ENCODE measurements at regions of chr9 and their contacts with region 1.

Region 1: DNA sequence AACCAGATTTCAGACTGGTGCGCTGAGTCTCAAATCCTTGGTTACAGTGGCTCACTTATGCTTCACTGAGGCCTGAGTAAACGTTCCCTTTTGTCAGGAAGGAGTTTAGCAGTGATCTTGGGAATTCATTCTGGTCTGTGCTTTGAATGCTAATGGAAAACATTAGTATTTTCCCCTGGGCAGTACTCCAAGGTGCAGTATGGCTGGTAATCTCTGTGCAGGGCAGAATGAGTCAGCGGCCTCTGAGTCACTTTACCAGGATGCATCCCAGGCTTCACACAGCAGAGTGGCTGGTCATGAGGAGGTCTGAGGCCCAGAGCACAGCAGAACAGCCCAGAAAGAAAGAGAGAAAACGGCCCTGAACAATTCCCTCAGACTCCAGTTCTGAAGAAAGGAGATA is 54.0 kb downstream of the PCA3 start:
- DNase-seq: peak; percentile 97
- H3K4me3 Mint-ChIP-seq: no peak overlapping the region
- H3K27ac Mint-ChIP-seq: peak overlapping the region; percentile 80
- H3K4me1 Mint-ChIP-seq: peaks cover 16% of the 10 kb centered on the region
- H3K27me3 Mint-ChIP-seq: no peaks in the 10 kb centered on the region
- CTCF ChIP-seq: no peak

Region 2: DNA sequence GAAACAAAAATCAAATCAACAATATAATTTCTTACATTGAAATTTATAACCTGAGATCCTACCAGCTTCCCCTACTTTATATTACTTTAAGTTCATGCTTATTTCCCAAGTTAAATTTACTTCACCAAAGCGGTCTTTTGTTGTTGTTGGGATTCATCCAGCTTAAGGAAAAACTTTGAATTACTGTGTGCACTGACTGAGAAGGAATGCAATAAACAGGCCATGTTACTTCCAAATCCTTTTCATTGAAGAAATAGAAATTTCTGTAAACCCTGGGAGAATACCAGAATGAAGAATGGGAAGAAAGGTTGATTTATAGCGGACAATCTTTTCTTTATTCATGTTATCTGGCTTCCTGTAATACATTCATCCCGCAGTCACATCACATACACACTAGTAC is 45.2 kb before region 1 on chr9:
- CTCF ChIA-PET with region 1: no interaction called
- POLR2A ChIA-PET with region 1: no interaction called
- intact Hi-C with region 1: no loop called
- DNase-seq: no peak
- H3K4me3 Mint-ChIP-seq: no peak overlapping the region
- H3K27ac Mint-ChIP-seq: no peak overlapping the region
- H3K4me1 Mint-ChIP-seq: no peaks in the 10 kb centered on the region
- H3K27me3 Mint-ChIP-seq: no peaks in the 10 kb centered on the region
- CTCF ChIP-seq: no peak

Region 3: GRCh38 chr9:76846297-76846696 is 28.0 kb after region 1 on chr9:
- CTCF ChIA-PET with region 1: no interaction called
- POLR2A ChIA-PET with region 1: no interaction called
- intact Hi-C with region 1: no loop called
- DNase-seq: no peak
- H3K4me3 Mint-ChIP-seq: no peak overlapping the region
- H3K27ac Mint-ChIP-seq: no peak overlapping the region
- H3K4me1 Mint-ChIP-seq: no peaks in the 10 kb centered on the region
- H3K27me3 Mint-ChIP-seq: no peaks in the 10 kb centered on the region
- CTCF ChIP-seq: no peak

Region 4: DNA sequence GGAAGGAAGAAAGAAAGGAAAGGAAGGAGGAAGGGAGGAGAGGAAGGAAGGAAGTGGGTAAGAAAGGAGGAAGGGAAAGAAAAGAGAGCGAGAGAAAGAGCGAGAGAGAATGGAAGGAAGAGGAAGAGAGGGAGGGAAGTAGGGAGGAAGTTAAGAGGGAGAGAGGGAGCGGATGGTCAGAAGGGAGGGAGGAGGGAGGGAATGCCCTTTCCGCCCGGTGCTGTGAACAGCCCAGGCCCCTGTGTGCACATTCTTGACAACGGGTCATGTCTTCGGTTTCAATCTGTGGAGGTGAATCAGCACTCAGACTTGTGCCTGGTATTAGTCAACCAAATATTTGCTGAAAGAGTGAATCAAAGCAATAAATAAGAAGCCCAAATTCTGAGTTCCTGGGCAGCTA is 48.4 kb after region 1 on chr9:
- CTCF ChIA-PET with region 1: no interaction called
- POLR2A ChIA-PET with region 1: interaction called, 3 read pairs
- intact Hi-C with region 1: loop called (anchors 5 kb)
- DNase-seq: peak; percentile 68
- H3K4me3 Mint-ChIP-seq: no peak overlapping the region
- H3K27ac Mint-ChIP-seq: peak overlapping the region; percentile 43
- H3K4me1 Mint-ChIP-seq: peaks cover 17% of the 10 kb centered on the region
- H3K27me3 Mint-ChIP-seq: no peaks in the 10 kb centered on the region
- CTCF ChIP-seq: no peak

Region 5: GRCh38 chr9:76912631-76913275 is 94.5 kb after region 1 on chr9:
- CTCF ChIA-PET with region 1: interaction called, 10 read pairs
- POLR2A ChIA-PET with region 1: interaction called, 6 read pairs
- intact Hi-C with region 1: loop called (anchors 1 kb)
- DNase-seq: peak; percentile 73
- H3K4me3 Mint-ChIP-seq: no peak overlapping the region
- H3K27ac Mint-ChIP-seq: peak overlapping the region; percentile 6
- H3K4me1 Mint-ChIP-seq: peaks cover 7% of the 10 kb centered on the region
- H3K27me3 Mint-ChIP-seq: peaks cover 37% of the 10 kb centered on the region
- CTCF ChIP-seq: no peak

Region 6: GRCh38 chr9:76926324-76926731 is 108.1 kb after region 1 on chr9:
- CTCF ChIA-PET with region 1: no interaction called
- POLR2A ChIA-PET with region 1: no interaction called
- intact Hi-C with region 1: loop called (anchors 5 kb)
- DNase-seq: peak; percentile 86
- H3K4me3 Mint-ChIP-seq: no peak overlapping the region
- H3K27ac Mint-ChIP-seq: peak overlapping the region; percentile 73
- H3K4me1 Mint-ChIP-seq: peaks cover 13% of the 10 kb centered on the region
- H3K27me3 Mint-ChIP-seq: no peaks in the 10 kb centered on the region
- CTCF ChIP-seq: no peak

Region 7: GRCh38 chr9:77163884-77164283 is 345.6 kb after region 1 on chr9:
- CTCF ChIA-PET with region 1: interaction called, 100 read pairs
- POLR2A ChIA-PET with region 1: interaction called, 17 read pairs
- intact Hi-C with region 1: no loop called
- DNase-seq: peak; percentile 81
- H3K4me3 Mint-ChIP-seq: peak overlapping the region; percentile 46
- H3K27ac Mint-ChIP-seq: peak overlapping the region; percentile 84
- H3K4me1 Mint-ChIP-seq: peaks cover 39% of the 10 kb centered on the region
- H3K27me3 Mint-ChIP-seq: no peaks in the 10 kb centered on the region
- CTCF ChIP-seq: no peak

Measured in MCF 10A (cell line).